Posterior vena cava (tissue), 2 donors: ENCODE measurements at regions of chr1 and their contacts with region 1.

Region 1: GRCh38 chr1:77031106-77031662 is 163.9 kb downstream of the ST6GALNAC5 start:
- DNase-seq: no peak

Region 2: GRCh38 chr1:77015748-77016341 is 15.3 kb before region 1 on chr1:
- intact Hi-C with region 1: loop called in 1 of 2 experiments (anchors 1 kb)
- DNase-seq: no peak

Region 3: GRCh38 chr1:78009836-78010235 is 978.7 kb after region 1 on chr1:
- intact Hi-C with region 1: no loop called
- DNase-seq: no peak